HepG2 (cell line): ENCODE measurements at regions of chr11 and their contacts with region 1.

Region 1: GRCh38 chr11:109040303-109040702 is 375.4 kb downstream of the DDX10 start:
- DNase-seq: peak; percentile 30
- ATAC-seq: peak; percentile 97
- H3K4me3 ChIP-seq: no peak overlapping the region
- H3K27ac ChIP-seq: no peak overlapping the region
- H3K4me1 ChIP-seq: no peaks in the 10 kb centered on the region
- H3K27me3 ChIP-seq: no peaks in the 10 kb centered on the region
- CTCF ChIP-seq: peak; percentile 68
- EP300 ChIP-seq: no peak
- POLR2A ChIP-seq: no peak
- RAD21 ChIP-seq: peak; percentile 38

Region 2: GRCh38 chr11:109071712-109072524 is 31.6 kb after region 1 on chr11:
- CTCF ChIA-PET with region 1: no interaction called
- POLR2A ChIA-PET with region 1: no interaction called
- in situ Hi-C with region 1: no loop called
- intact Hi-C with region 1: no loop called
- DNase-seq: no peak
- ATAC-seq: no peak
- H3K4me3 ChIP-seq: no peak overlapping the region
- H3K27ac ChIP-seq: no peak overlapping the region
- H3K4me1 ChIP-seq: no peaks in the 10 kb centered on the region
- H3K27me3 ChIP-seq: no peaks in the 10 kb centered on the region; a peak in 1 of 5 replicates
- CTCF ChIP-seq: no peak
- EP300 ChIP-seq: no peak
- POLR2A ChIP-seq: no peak
- RAD21 ChIP-seq: no peak

Region 3: GRCh38 chr11:109697140-109697843 is 657.0 kb after region 1 on chr11:
- CTCF ChIA-PET with region 1: no interaction called
- POLR2A ChIA-PET with region 1: no interaction called
- in situ Hi-C with region 1: no loop called
- intact Hi-C with region 1: loop called (anchors 5 kb)
- DNase-seq: peak; percentile 23
- ATAC-seq: peak; percentile 89
- H3K4me3 ChIP-seq: no peak overlapping the region
- H3K27ac ChIP-seq: no peak overlapping the region
- H3K4me1 ChIP-seq: no peaks in the 10 kb centered on the region
- H3K27me3 ChIP-seq: no peaks in the 10 kb centered on the region; a peak in 1 of 5 replicates
- CTCF ChIP-seq: peak; percentile 64
- EP300 ChIP-seq: no peak
- POLR2A ChIP-seq: no peak
- RAD21 ChIP-seq: no peak